ENCODE measurements at regions of chr1 and their contacts with region 1.

Region 1: DNA sequence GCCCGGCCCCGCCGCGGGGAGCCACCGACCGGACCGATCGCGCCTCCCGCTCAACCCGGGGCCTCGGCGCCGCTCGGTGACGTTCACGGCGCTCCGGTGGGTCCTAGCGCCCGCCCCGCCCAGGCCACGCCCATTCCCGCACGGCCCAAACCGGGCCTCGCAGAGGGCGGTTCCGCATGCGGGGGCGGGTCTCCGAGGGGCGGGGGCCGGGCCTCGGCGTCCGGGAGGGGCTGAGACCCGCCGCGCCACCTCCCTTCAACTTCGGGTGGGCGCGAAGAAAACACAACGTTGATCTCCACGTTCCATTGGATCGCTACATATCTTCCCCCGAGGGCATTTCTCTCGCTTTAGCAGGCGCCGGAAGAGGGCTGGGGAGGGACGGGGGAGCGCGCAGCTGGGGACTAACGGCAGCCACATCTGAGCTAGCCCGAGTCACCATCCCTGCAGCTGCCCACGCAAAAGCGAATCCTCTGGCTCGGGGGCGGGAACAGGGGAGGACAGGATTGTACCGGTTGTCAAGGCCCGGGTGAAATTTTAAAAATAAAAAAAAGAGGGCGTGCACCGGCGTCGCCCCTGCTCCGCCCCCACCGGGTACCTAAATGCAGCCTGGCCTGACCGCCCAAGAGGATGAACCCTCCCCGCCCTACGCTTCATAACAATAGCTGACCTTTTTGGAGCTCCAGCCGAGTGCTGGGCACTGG is at the start of gene MAD2L2:
- DNase-seq: peak; percentile 80 to 94 (median 86)
- ATAC-seq: peak; percentile 87
- H3K4me3 ChIP-seq: peak within 1 kb of the TSS; percentile 99
- H3K4me3 Mint-ChIP-seq: peak within 1 kb of the TSS; percentile 97
- H3K27ac ChIP-seq: peak within 1 kb of the TSS; percentile 35 to 60
- H3K27ac Mint-ChIP-seq: peak within 1 kb of the TSS; percentile 86
- H3K4me1 ChIP-seq: peaks cover 26% of the 10 kb centered on the region
- H3K4me1 Mint-ChIP-seq: peaks cover 22% of the 10 kb centered on the region
- H3K27me3 ChIP-seq: no peaks in the 10 kb centered on the region
- H3K27me3 Mint-ChIP-seq: peaks cover 2% of the 10 kb centered on the region
- CTCF ChIP-seq: no peak
- total RNA-seq, gene MAD2L2: 24.6 to 28.3 TPM

Region 2: GRCh38 chr1:11535761-11536572 is 145.3 kb before region 1 on chr1:
- CTCF ChIA-PET with region 1: no interaction called
- POLR2A ChIA-PET with region 1: no interaction called
- intact Hi-C with region 1: no loop called
- DNase-seq: no peak
- ATAC-seq: no peak
- H3K4me3 ChIP-seq: no peak overlapping the region
- H3K4me3 Mint-ChIP-seq: no peak overlapping the region
- H3K27ac ChIP-seq: no peak overlapping the region
- H3K27ac Mint-ChIP-seq: no peak overlapping the region
- H3K4me1 ChIP-seq: no peaks in the 10 kb centered on the region
- H3K4me1 Mint-ChIP-seq: no peaks in the 10 kb centered on the region
- H3K27me3 ChIP-seq: peaks cover 3 to 9% of the 10 kb centered on the region in 2 experiments
- H3K27me3 Mint-ChIP-seq: peaks cover 6% of the 10 kb centered on the region
- CTCF ChIP-seq: no peak

Region 3: GRCh38 chr1:11654137-11654938 is 26.9 kb before region 1 on chr1 and contains the starts of genes FBXO2 and FBXO44:
- CTCF ChIA-PET with region 1: interaction called, 10 read pairs
- POLR2A ChIA-PET with region 1: interaction called, 3 read pairs
- intact Hi-C with region 1: loop called in 1 of 2 experiments (anchors 1 kb)
- DNase-seq: peak; percentile 44 to 83 (median 66)
- ATAC-seq: peak; percentile 76
- H3K4me3 ChIP-seq: peak within 1 kb of the TSS; percentile 69
- H3K4me3 Mint-ChIP-seq: peak within 1 kb of the TSS; percentile 83
- H3K27ac ChIP-seq: no peak within 1 kb of the TSS
- H3K27ac Mint-ChIP-seq: peak within 1 kb of the TSS; percentile 51
- H3K4me1 ChIP-seq: peaks cover 51% of the 10 kb centered on the region
- H3K4me1 Mint-ChIP-seq: peaks cover 44% of the 10 kb centered on the region
- H3K27me3 ChIP-seq: no peaks in the 10 kb centered on the region
- H3K27me3 Mint-ChIP-seq: no peaks in the 10 kb centered on the region
- CTCF ChIP-seq: no peak
- total RNA-seq, gene FBXO2: 3.2 to 3.7 TPM
- total RNA-seq, gene FBXO44: 44.9 to 48.4 TPM

Region 4: DNA sequence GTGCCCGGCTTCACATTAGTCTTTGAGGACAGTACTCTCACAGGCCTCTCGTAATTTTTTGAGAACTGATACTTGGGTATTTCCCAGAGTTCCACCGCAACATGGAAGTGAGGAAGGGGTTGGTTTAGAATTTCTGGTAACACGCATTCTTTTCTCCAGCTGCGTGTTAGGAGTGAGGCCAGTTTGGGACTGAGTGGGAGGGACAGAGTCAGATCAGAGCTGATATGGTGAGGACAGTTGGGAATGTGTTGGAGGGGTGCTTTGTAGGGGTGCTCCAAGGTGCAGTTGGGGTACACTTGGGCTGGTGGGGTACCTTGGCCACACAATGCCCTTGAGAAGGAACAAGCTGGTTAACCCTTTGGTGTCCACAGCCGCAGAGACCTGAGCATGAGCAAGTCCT is 10.5 kb before region 1 on chr1:
- CTCF ChIA-PET with region 1: interaction called, 5 read pairs
- POLR2A ChIA-PET with region 1: interaction called, 42 read pairs
- intact Hi-C with region 1: no loop called
- DNase-seq: peak in 2 of 14 experiments; percentile 38 to 45
- ATAC-seq: no peak
- H3K4me3 ChIP-seq: no peak overlapping the region
- H3K4me3 Mint-ChIP-seq: no peak overlapping the region
- H3K27ac ChIP-seq: no peak overlapping the region
- H3K27ac Mint-ChIP-seq: no peak overlapping the region
- H3K4me1 ChIP-seq: no peaks in the 10 kb centered on the region
- H3K4me1 Mint-ChIP-seq: no peaks in the 10 kb centered on the region
- H3K27me3 ChIP-seq: no peaks in the 10 kb centered on the region
- H3K27me3 Mint-ChIP-seq: no peaks in the 10 kb centered on the region
- CTCF ChIP-seq: no peak

Region 5: GRCh38 chr1:11719313-11720032 is 38.3 kb after region 1 on chr1:
- CTCF ChIA-PET with region 1: interaction called, 16 read pairs
- POLR2A ChIA-PET with region 1: interaction called, 23 read pairs
- intact Hi-C with region 1: loop called in 1 of 2 experiments (anchors 1 kb)
- DNase-seq: peak; percentile 80 to 94 (median 88)
- ATAC-seq: peak; percentile 89
- H3K4me3 ChIP-seq: peak overlapping the region; percentile 54
- H3K4me3 Mint-ChIP-seq: peak overlapping the region; percentile 86
- H3K27ac ChIP-seq: peak overlapping the region; percentile 15 to 64
- H3K27ac Mint-ChIP-seq: peak overlapping the region; percentile 86
- H3K4me1 ChIP-seq: peaks cover 18% of the 10 kb centered on the region
- H3K4me1 Mint-ChIP-seq: peaks cover 17% of the 10 kb centered on the region
- H3K27me3 ChIP-seq: no peaks in the 10 kb centered on the region
- H3K27me3 Mint-ChIP-seq: no peaks in the 10 kb centered on the region
- CTCF ChIP-seq: peak; percentile 96

Region 6: DNA sequence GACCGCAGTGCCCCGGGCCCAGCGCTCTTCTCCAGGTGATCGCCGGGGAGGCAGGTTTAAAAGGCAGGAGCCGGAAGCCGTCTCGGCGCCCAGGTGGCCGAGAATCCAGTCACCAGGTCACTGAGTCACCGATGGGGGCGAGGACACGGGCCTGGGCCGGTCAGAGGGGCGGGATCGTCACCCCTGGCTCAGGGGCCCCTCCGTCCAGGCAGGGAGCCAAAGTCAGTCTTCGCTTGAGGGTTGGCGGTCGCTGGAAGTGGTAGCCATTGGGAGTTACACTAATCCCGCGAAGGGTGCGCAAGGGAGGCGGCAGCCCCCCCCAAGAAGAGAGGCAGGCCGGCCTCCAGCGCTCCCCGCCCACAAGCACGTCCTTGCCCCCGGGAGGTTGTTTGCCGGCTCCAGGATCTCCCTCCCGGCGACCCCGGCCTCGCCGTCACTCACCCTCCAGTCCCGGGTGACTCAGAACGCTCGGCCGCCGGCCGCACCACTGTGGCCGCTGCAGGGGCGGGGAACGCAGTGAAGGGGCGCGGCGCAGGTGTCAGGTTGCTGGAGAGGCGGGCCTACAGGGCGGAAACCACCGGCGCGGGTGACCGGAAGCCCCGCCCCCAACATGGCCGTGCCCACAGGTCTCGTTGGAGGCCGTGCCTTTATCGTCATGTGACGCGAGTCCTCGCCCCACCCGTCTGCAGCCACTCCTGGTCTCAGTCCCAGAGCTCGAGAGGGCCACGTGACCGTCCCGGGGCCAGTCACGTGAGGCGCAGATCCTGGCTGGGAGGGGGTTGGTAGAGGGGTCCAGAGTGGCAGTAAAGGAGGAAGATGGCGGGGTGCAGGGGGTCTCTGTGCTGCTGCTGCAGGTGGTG is 124.5 kb after region 1 on chr1 and contains the starts of genes CLCN6 and MTHFR:
- CTCF ChIA-PET with region 1: no interaction called
- POLR2A ChIA-PET with region 1: interaction called, 5 read pairs
- intact Hi-C with region 1: loop called in 1 of 2 experiments (anchors 2 kb)
- DNase-seq: peak; percentile 93 to 99 (median 97)
- ATAC-seq: peak; percentile 85
- H3K4me3 ChIP-seq: peak within 1 kb of the TSS; percentile 98
- H3K4me3 Mint-ChIP-seq: peak within 1 kb of the TSS; percentile 99
- H3K27ac ChIP-seq: peak within 1 kb of the TSS; percentile 86 to 92
- H3K27ac Mint-ChIP-seq: peak within 1 kb of the TSS; percentile 91
- H3K4me1 ChIP-seq: peaks cover 58% of the 10 kb centered on the region
- H3K4me1 Mint-ChIP-seq: peaks cover 66% of the 10 kb centered on the region
- H3K27me3 ChIP-seq: no peaks in the 10 kb centered on the region
- H3K27me3 Mint-ChIP-seq: no peaks in the 10 kb centered on the region
- CTCF ChIP-seq: no peak
- total RNA-seq, gene CLCN6: 10.9 to 11.2 TPM
- total RNA-seq, gene MTHFR: 30.8 to 31.3 TPM